GM12878 (cell line): ENCODE measurements at regions of chr15 and their contacts with region 1.

Region 1: GRCh38 chr15:63891079-63891767 is 57.5 kb upstream of the HERC1 start:
- DNase-seq: peak; percentile 72
- ATAC-seq: peak; percentile 67
- H3K4me3 ChIP-seq: no peak overlapping the region
- H3K27ac ChIP-seq: peak overlapping the region; percentile 79
- H3K4me1 ChIP-seq: peaks cover 62% of the 10 kb centered on the region
- H3K27me3 ChIP-seq: no peaks in the 10 kb centered on the region
- CTCF ChIP-seq: peak; percentile 80 to 88 (median 86)
- EP300 ChIP-seq: no peak
- POLR2A ChIP-seq: no peak
- RAD21 ChIP-seq: peak; percentile 88

Region 2: DNA sequence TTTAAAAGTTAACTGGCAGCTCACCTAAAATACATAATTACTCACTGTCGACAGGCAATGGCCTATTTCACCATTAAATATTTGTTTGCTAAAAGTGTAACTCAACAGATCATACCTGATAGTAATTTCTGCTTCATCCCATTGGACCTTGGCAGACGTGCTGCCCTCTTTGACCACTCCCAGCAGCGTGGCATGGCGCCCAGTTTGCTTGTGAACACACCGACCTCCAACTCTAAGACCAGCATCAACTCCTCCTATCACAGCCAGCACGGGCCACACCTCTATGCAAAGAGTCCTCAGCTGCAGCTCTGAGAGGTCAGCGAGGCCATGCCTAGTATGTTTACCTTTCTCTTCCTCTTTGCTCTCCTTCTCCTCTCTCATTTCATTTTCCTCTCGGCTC is 213.5 kb before region 1 on chr15:
- CTCF ChIA-PET with region 1: no interaction called
- POLR2A ChIA-PET with region 1: no interaction called
- RAD21 ChIA-PET with region 1: no interaction called
- SMC1A ChIA-PET with region 1: no interaction called
- in situ Hi-C with region 1: no loop called
- intact Hi-C with region 1: no loop called
- DNase-seq: no peak
- ATAC-seq: no peak
- H3K4me3 ChIP-seq: no peak overlapping the region
- H3K27ac ChIP-seq: no peak overlapping the region
- H3K4me1 ChIP-seq: no peaks in the 10 kb centered on the region
- H3K27me3 ChIP-seq: no peaks in the 10 kb centered on the region
- CTCF ChIP-seq: no peak
- EP300 ChIP-seq: no peak
- POLR2A ChIP-seq: no peak
- RAD21 ChIP-seq: no peak

Region 3: GRCh38 chr15:63826528-63826927 is 64.7 kb before region 1 on chr15:
- CTCF ChIA-PET with region 1: interaction called, 35 read pairs
- POLR2A ChIA-PET with region 1: interaction called, 3 read pairs
- RAD21 ChIA-PET with region 1: interaction called, 34 read pairs
- SMC1A ChIA-PET with region 1: interaction called, 59 read pairs
- in situ Hi-C with region 1: no loop called
- intact Hi-C with region 1: loop called (anchors 1 kb)
- DNase-seq: no peak
- ATAC-seq: no peak
- H3K4me3 ChIP-seq: no peak overlapping the region
- H3K27ac ChIP-seq: no peak overlapping the region
- H3K4me1 ChIP-seq: no peaks in the 10 kb centered on the region
- H3K27me3 ChIP-seq: no peaks in the 10 kb centered on the region
- CTCF ChIP-seq: peak; percentile 21 to 31 (median 27); a peak in 3 of 6 replicates
- EP300 ChIP-seq: no peak
- POLR2A ChIP-seq: no peak
- RAD21 ChIP-seq: peak; percentile 44

Region 4: GRCh38 chr15:63839722-63840121 is 51.5 kb before region 1 on chr15:
- CTCF ChIA-PET with region 1: interaction called, 13 read pairs
- POLR2A ChIA-PET with region 1: interaction called, 5 read pairs
- RAD21 ChIA-PET with region 1: interaction called, 11 read pairs
- SMC1A ChIA-PET with region 1: interaction called, 15 read pairs
- in situ Hi-C with region 1: no loop called
- intact Hi-C with region 1: no loop called
- DNase-seq: no peak
- ATAC-seq: no peak
- H3K4me3 ChIP-seq: no peak overlapping the region
- H3K27ac ChIP-seq: no peak overlapping the region
- H3K4me1 ChIP-seq: peaks cover 14% of the 10 kb centered on the region
- H3K27me3 ChIP-seq: no peaks in the 10 kb centered on the region
- CTCF ChIP-seq: no peak
- EP300 ChIP-seq: no peak
- POLR2A ChIP-seq: no peak
- RAD21 ChIP-seq: no peak

Region 5: GRCh38 chr15:63945007-63945788 is 54.0 kb after region 1 on chr15:
- CTCF ChIA-PET with region 1: interaction called, 42 read pairs
- POLR2A ChIA-PET with region 1: no interaction called
- RAD21 ChIA-PET with region 1: interaction called, 8 read pairs
- SMC1A ChIA-PET with region 1: interaction called, 9 read pairs
- in situ Hi-C with region 1: no loop called
- intact Hi-C with region 1: no loop called
- DNase-seq: no peak
- ATAC-seq: peak; percentile 89
- H3K4me3 ChIP-seq: no peak overlapping the region
- H3K27ac ChIP-seq: no peak overlapping the region
- H3K4me1 ChIP-seq: peaks cover 13% of the 10 kb centered on the region
- H3K27me3 ChIP-seq: no peaks in the 10 kb centered on the region
- CTCF ChIP-seq: peak; percentile 83 to 99 (median 98)
- EP300 ChIP-seq: no peak
- POLR2A ChIP-seq: no peak
- RAD21 ChIP-seq: peak; percentile 78

Region 6: GRCh38 chr15:64067564-64068030 is 176.4 kb after region 1 on chr15:
- CTCF ChIA-PET with region 1: interaction called, 28 read pairs
- POLR2A ChIA-PET with region 1: interaction called, 11 read pairs
- RAD21 ChIA-PET with region 1: interaction called, 6 read pairs
- SMC1A ChIA-PET with region 1: interaction called, 27 read pairs
- in situ Hi-C with region 1: no loop called
- intact Hi-C with region 1: loop called (anchors 2 kb)
- DNase-seq: peak; percentile 40
- ATAC-seq: peak; percentile 94
- H3K4me3 ChIP-seq: no peak overlapping the region
- H3K27ac ChIP-seq: no peak overlapping the region
- H3K4me1 ChIP-seq: peaks cover 13% of the 10 kb centered on the region
- H3K27me3 ChIP-seq: no peaks in the 10 kb centered on the region
- CTCF ChIP-seq: peak; percentile 72 to 83 (median 77)
- EP300 ChIP-seq: no peak
- POLR2A ChIP-seq: no peak
- RAD21 ChIP-seq: peak; percentile 89